T-cell (primary cell): ENCODE measurements at regions of chr11 and their contacts with region 1.

Region 1: DNA sequence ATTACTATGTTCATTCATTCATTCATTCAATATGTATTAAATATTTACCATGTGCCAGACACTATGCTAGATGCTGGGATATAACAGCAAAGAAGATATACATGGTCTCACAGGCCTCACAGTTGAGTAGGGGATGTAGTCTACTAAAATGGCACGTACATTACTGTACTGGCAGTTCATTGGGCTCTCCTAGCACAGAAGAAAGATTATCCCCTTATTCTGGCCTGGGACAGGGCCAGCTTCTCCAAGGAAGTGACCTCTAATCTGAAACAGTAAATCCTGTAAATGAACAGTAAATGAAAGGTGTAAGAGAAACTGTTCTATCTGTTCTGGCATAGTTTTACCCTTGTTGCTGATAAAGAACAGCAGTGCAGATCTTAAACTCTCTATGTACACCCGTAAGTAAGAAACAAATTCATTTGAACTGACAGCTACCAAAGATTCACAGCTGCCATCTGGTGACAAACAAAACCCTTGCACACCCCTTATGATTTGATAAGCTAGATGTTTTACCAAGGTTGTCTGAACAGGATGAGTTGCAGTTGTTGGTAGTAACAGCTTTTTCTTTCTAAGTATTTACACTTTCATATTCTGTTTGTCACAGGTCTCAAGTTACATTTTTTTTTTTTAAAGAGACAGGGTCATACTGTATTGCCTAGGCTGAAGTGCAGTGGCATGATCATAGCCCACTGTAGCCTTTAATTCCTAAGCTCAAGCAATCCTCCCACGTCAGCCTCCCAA is 263.1 kb downstream of the TMEM135 start:
- DNase-seq: no peak
- ATAC-seq: no peak
- H3K4me3 ChIP-seq: no peak overlapping the region
- H3K4me3 Mint-ChIP-seq: no peak overlapping the region
- H3K27ac ChIP-seq: no peak overlapping the region
- H3K27ac Mint-ChIP-seq: no peak overlapping the region
- H3K4me1 ChIP-seq: no peaks in the 10 kb centered on the region
- H3K4me1 Mint-ChIP-seq: peaks cover 3 to 5% (median 4%) of the 10 kb centered on the region in 3 donors
- H3K27me3 ChIP-seq: no peaks in the 10 kb centered on the region
- H3K27me3 Mint-ChIP-seq: no peaks in the 10 kb centered on the region

Region 2: GRCh38 chr11:87007963-87008362 is 292.8 kb before region 1 on chr11:
- CTCF ChIA-PET with region 1: interaction called in 1 of 2 experiments, 11 read pairs
- POLR2A ChIA-PET with region 1: no interaction called
- DNase-seq: no peak
- ATAC-seq: no peak
- H3K4me3 ChIP-seq: no peak overlapping the region
- H3K4me3 Mint-ChIP-seq: no peak overlapping the region
- H3K27ac ChIP-seq: no peak overlapping the region
- H3K27ac Mint-ChIP-seq: no peak overlapping the region
- H3K4me1 ChIP-seq: no peaks in the 10 kb centered on the region
- H3K4me1 Mint-ChIP-seq: peaks cover 0 to 1% (median 0%) of the 10 kb centered on the region in 3 donors
- H3K27me3 ChIP-seq: no peaks in the 10 kb centered on the region
- H3K27me3 Mint-ChIP-seq: peaks cover 0 to 2% of the 10 kb centered on the region in 2 donors

Region 3: DNA sequence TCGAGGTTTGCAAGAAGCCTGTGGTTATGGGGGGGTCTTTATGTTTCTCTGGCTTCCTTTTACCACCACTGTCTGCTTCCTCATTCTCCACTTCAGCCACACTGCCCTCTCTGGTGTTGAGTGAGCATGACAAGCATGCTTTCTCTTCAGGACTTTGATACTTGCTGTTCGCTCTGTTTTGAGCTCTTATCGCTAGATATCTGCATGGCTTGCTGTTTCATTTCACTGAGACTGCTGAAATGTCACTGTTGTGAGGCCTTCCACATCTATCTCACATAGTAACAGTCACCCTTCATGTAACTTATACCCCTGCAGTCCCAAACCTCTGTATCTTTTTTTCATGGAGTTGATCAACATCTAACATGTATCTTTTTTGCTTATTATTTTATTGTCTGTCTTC is 203.2 kb before region 1 on chr11:
- CTCF ChIA-PET with region 1: no interaction called
- POLR2A ChIA-PET with region 1: no interaction called
- DNase-seq: peak in 28 of 35 experiments; percentile 3 to 59 (median 20)
- ATAC-seq: peak; percentile 66 to 89 (median 75)
- H3K4me3 ChIP-seq: no peak overlapping the region
- H3K4me3 Mint-ChIP-seq: no peak overlapping the region
- H3K27ac ChIP-seq: no peak overlapping the region
- H3K27ac Mint-ChIP-seq: peak overlapping the region; percentile 13 to 34
- H3K4me1 ChIP-seq: peaks cover 0 to 2% of the 10 kb centered on the region in 2 experiments
- H3K4me1 Mint-ChIP-seq: peaks cover 8 to 11% (median 10%) of the 10 kb centered on the region in 3 donors
- H3K27me3 ChIP-seq: no peaks in the 10 kb centered on the region
- H3K27me3 Mint-ChIP-seq: no peaks in the 10 kb centered on the region

Region 4: GRCh38 chr11:87193756-87194470 is 106.9 kb before region 1 on chr11:
- CTCF ChIA-PET with region 1: no interaction called
- POLR2A ChIA-PET with region 1: no interaction called
- DNase-seq: no peak
- ATAC-seq: no peak
- H3K4me3 ChIP-seq: no peak overlapping the region
- H3K4me3 Mint-ChIP-seq: no peak overlapping the region
- H3K27ac ChIP-seq: no peak overlapping the region
- H3K27ac Mint-ChIP-seq: no peak overlapping the region
- H3K4me1 ChIP-seq: no peaks in the 10 kb centered on the region
- H3K4me1 Mint-ChIP-seq: peaks cover 2 to 14% (median 4%) of the 10 kb centered on the region in 3 donors
- H3K27me3 ChIP-seq: no peaks in the 10 kb centered on the region
- H3K27me3 Mint-ChIP-seq: no peaks in the 10 kb centered on the region